ENCODE measurements at regions of chr19 and their contacts with region 1.

Region 1: GRCh38 chr19:10132905-10133304 is 13.2 kb upstream of the EIF3G start:
- DNase-seq: no peak
- ATAC-seq: no peak
- H3K4me3 ChIP-seq: no peak overlapping the region
- H3K27ac ChIP-seq: no peak overlapping the region
- H3K4me1 ChIP-seq: no peaks in the 10 kb centered on the region
- H3K27me3 ChIP-seq: no peaks in the 10 kb centered on the region
- CTCF ChIP-seq: no peak
- EP300 ChIP-seq: no peak
- POLR2A ChIP-seq: no peak
- RAD21 ChIP-seq: no peak

Region 2: GRCh38 chr19:10120538-10121189 is 12.2 kb before region 1 on chr19:
- CTCF ChIA-PET with region 1: interaction called, 12 read pairs
- POLR2A ChIA-PET with region 1: no interaction called
- RAD21 ChIA-PET with region 1: no interaction called
- SMC1A ChIA-PET with region 1: no interaction called
- in situ Hi-C with region 1: no loop called
- intact Hi-C with region 1: no loop called
- DNase-seq: no peak
- ATAC-seq: no peak
- H3K4me3 ChIP-seq: no peak overlapping the region
- H3K27ac ChIP-seq: no peak overlapping the region
- H3K4me1 ChIP-seq: 0 out of 2 replicates have a peak, but pooled peaks cover 2% of the 10 kb centered on the region
- H3K27me3 ChIP-seq: no peaks in the 10 kb centered on the region
- CTCF ChIP-seq: no peak
- EP300 ChIP-seq: no peak
- POLR2A ChIP-seq: no peak
- RAD21 ChIP-seq: no peak

Region 3: DNA sequence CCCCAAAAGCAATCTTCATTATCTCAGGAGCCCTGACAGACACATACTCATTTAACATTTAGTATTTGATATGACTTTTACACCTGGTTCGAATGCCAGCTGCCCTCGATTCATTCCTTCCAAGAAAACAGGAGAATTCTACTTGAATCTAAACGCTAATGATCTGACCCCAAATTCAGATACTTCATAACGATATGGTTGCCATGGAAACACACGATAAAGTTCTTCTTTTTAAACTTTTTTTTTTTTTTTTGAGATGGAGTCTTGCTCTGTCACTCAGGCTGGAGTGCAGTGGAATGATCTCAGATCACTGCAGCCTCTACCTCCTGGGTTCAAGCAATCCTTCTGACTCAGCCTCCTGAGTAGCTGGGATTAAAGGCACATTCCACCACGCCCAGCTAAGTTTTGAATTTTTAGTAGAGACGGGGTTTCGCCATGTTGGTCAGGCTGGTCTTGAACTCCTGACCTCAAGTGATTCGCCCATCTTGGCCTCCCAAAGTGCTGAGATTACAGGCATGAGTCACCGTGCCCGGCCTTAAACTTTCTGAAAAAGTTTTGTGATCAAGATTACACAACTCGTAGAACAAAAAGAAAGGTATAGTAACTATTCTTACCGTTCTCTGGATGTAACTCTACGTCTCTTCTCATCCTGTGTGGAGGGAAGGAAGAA is 40.5 kb after region 1 on chr19:
- CTCF ChIA-PET with region 1: no interaction called
- POLR2A ChIA-PET with region 1: no interaction called
- RAD21 ChIA-PET with region 1: no interaction called
- SMC1A ChIA-PET with region 1: no interaction called
- in situ Hi-C with region 1: no loop called
- intact Hi-C with region 1: no loop called
- DNase-seq: no peak
- ATAC-seq: no peak
- H3K4me3 ChIP-seq: no peak overlapping the region
- H3K27ac ChIP-seq: no peak overlapping the region
- H3K4me1 ChIP-seq: peaks cover 5% of the 10 kb centered on the region
- H3K27me3 ChIP-seq: no peaks in the 10 kb centered on the region
- CTCF ChIP-seq: no peak
- EP300 ChIP-seq: no peak
- POLR2A ChIP-seq: no peak
- RAD21 ChIP-seq: no peak

Measured in GM12878 (cell line).